ENCODE measurements at regions of chr6 and their contacts with region 1.

Region 1: GRCh38 chr6:45714741-45715507 is 300.7 kb downstream of the CLIC5 start:
- DNase-seq: peak; percentile 87
- H3K4me3 Mint-ChIP-seq: no peak overlapping the region
- H3K27ac Mint-ChIP-seq: peak overlapping the region; percentile 13
- H3K4me1 Mint-ChIP-seq: peaks cover 11% of the 10 kb centered on the region
- H3K27me3 Mint-ChIP-seq: no peaks in the 10 kb centered on the region
- CTCF ChIP-seq: peak; percentile 87

Region 2: DNA sequence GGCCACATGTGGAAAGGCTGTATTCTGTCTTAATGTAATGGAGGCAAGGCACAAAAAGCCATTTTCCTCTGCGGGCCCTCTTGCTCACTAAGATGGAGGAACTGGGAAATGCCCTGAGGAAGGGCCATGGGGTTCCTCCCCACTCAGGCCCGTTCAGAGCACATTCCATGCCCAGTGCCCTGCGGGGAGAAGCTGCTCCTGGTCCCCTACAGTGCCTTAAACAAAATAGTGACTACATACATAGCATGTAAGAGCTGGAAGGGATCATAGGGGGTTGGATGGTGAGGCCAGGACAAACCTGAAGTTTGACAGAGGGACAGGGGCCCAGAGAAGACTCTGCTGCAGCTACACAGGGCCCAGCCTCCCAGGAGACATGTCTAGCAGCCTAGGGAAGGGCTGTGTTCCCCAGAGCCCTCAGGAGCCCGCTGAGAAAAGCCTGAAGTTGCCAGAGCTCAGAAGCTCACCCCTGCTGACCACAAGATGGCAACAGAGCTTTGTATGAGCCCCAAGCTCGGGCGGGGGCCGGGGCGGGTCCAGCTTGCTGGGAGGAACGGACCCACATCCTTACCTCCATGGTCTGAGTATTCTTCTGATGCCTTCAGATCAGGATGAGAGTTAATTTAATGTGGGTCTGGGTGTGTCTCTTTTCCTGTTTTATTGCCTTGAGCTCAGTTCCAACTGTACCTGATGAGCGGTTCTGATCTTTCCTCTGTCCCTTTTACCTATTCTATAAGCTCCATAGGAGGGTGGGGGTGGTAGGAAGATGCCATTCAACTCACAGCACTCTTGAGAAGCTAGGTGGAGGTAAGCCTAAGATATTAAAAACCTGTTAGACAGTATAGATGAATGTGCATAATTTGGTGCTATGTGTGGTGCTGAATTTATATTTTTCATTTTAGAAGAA is 1084.5 kb before region 1 on chr6:
- CTCF ChIA-PET with region 1: interaction called, 16 read pairs
- POLR2A ChIA-PET with region 1: interaction called, 3 read pairs
- intact Hi-C with region 1: no loop called
- DNase-seq: peak; percentile 55
- H3K4me3 Mint-ChIP-seq: no peak overlapping the region
- H3K27ac Mint-ChIP-seq: no peak overlapping the region
- H3K4me1 Mint-ChIP-seq: no peaks in the 10 kb centered on the region
- H3K27me3 Mint-ChIP-seq: peaks cover 14% of the 10 kb centered on the region
- CTCF ChIP-seq: peak; percentile 67

Region 3: GRCh38 chr6:45086360-45087084 is 628.4 kb before region 1 on chr6:
- CTCF ChIA-PET with region 1: interaction called, 10 read pairs
- POLR2A ChIA-PET with region 1: no interaction called
- intact Hi-C with region 1: loop called (anchors 5 kb)
- DNase-seq: no peak
- H3K4me3 Mint-ChIP-seq: no peak overlapping the region
- H3K27ac Mint-ChIP-seq: no peak overlapping the region
- H3K4me1 Mint-ChIP-seq: peaks cover 7% of the 10 kb centered on the region
- H3K27me3 Mint-ChIP-seq: no peaks in the 10 kb centered on the region
- CTCF ChIP-seq: peak; percentile 17

Region 4: GRCh38 chr6:45416700-45417099 is 298.2 kb before region 1 on chr6:
- CTCF ChIA-PET with region 1: interaction called, 17 read pairs
- POLR2A ChIA-PET with region 1: interaction called, 13 read pairs
- intact Hi-C with region 1: loop called (anchors 1 kb)
- DNase-seq: no peak
- H3K4me3 Mint-ChIP-seq: no peak overlapping the region
- H3K27ac Mint-ChIP-seq: no peak overlapping the region
- H3K4me1 Mint-ChIP-seq: peaks cover 8% of the 10 kb centered on the region
- H3K27me3 Mint-ChIP-seq: no peaks in the 10 kb centered on the region
- CTCF ChIP-seq: no peak

Region 5: DNA sequence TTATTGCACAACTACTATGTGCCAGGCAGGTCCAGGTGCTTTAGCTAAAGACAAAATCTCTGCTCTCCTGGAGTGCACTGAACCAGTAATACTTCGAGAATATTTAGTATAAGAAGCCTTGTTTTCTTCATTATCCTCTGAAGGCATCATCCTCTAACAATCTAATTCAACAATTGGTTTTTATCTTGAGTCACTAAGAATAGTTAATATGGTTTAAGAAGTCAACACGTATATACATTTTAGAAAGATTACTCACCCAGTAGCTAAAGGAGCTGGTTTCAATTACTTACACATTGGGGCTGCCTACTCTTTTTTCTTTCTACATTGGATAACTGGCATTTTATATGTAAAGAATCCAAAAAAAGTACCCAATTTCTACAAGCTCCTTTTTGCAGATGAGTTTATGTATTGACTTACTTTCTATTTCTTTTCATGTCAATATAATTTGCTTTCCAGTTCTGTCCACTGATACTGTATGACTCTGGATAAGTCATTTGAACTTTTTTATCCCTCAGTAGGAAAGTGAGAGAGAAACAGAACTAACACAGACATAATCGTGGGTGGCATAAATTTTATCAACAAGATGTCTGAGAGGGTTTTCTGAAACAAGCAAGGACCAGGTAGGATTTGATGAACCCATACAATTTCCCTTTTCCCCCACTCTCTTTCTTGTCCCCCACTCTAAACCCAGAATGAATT is 11.7 kb before region 1 on chr6:
- CTCF ChIA-PET with region 1: interaction called, 23 read pairs
- POLR2A ChIA-PET with region 1: interaction called, 3 read pairs
- intact Hi-C with region 1: no loop called
- DNase-seq: no peak
- H3K4me3 Mint-ChIP-seq: no peak overlapping the region
- H3K27ac Mint-ChIP-seq: no peak overlapping the region
- H3K4me1 Mint-ChIP-seq: no peaks in the 10 kb centered on the region
- H3K27me3 Mint-ChIP-seq: no peaks in the 10 kb centered on the region
- CTCF ChIP-seq: no peak

Measured in MCF 10A (cell line).